Endothelial cell of umbilical vein (primary cell): ENCODE measurements at regions of chr5 and their contacts with region 1.

Region 1: DNA sequence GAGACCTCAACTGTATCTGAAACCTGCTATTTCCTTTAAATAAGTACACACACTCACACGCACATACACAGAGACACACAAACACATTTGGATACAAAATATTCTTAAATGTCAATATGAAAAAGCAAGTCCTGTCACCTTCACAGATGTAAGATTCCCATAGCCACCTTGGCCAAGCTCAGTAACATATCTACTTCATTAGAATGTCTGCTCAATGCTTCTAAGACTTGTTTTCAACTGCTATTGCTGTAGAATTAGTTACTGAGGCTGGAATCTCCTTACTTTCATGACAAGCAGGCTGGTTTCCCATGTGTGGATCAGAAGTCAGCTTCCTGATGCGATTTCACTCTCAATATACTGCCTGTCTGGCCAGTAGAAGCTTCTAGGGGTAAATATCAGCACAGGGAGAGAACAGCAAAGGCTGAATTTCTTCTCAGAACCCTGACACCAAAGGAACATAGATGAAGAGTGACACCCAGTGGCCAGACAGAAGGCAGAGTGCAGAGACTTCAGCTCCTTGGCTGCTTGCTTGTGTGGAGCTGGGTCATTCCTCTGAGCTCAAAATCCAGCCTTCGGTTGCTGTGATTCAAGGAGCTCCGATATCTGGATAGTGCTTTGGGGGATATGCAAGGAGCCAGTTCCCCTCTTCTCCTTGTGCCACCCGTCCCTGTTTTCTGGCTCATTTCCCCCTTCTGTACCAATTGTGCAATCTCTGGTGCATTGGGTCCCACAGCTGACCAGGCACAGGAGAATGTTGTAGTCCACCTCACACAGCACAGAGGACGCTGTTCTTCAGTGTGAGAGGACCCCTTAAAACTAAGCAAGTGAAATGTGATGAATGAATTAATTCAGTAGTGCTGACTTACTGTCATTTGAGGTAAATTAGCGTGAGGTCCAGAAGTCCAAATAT is 26.6 kb upstream of the ABLIM3 start:
- DNase-seq: peak; percentile 88
- H3K4me3 ChIP-seq: no peak overlapping the region
- H3K27ac ChIP-seq: no peak overlapping the region
- H3K4me1 ChIP-seq: peaks cover 6% of the 10 kb centered on the region
- H3K27me3 ChIP-seq: no peaks in the 10 kb centered on the region
- CTCF ChIP-seq: peak; percentile 83 to 88
- POLR2A ChIP-seq: no peak

Region 2: DNA sequence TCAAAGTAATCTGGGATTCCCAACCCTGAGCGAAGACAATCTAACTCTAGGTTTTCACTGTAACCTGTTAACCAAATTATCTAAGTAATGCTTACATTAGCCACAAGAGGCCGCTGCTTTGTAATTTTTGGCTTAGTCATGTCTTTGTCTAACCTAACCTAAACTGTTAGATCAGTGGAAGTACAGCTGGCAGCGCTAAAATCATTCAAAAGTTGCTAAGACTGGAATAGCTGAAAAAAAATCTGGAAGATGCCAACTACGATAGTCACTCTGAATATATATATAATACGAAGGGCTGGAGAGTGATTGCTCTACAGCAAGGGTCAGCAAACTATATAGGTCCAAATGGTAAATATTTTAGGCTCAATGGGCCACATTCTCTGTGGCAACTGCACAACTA is 670.7 kb before region 1 on chr5:
- CTCF ChIA-PET with region 1: interaction called, 12 read pairs
- POLR2A ChIA-PET with region 1: no interaction called
- dilution Hi-C with region 1: no loop called
- intact Hi-C with region 1: no loop called
- DNase-seq: peak; percentile 79
- H3K4me3 ChIP-seq: no peak overlapping the region
- H3K27ac ChIP-seq: no peak overlapping the region
- H3K4me1 ChIP-seq: no peaks in the 10 kb centered on the region
- H3K27me3 ChIP-seq: no peaks in the 10 kb centered on the region
- CTCF ChIP-seq: peak; percentile 48 to 50
- POLR2A ChIP-seq: no peak

Region 3: DNA sequence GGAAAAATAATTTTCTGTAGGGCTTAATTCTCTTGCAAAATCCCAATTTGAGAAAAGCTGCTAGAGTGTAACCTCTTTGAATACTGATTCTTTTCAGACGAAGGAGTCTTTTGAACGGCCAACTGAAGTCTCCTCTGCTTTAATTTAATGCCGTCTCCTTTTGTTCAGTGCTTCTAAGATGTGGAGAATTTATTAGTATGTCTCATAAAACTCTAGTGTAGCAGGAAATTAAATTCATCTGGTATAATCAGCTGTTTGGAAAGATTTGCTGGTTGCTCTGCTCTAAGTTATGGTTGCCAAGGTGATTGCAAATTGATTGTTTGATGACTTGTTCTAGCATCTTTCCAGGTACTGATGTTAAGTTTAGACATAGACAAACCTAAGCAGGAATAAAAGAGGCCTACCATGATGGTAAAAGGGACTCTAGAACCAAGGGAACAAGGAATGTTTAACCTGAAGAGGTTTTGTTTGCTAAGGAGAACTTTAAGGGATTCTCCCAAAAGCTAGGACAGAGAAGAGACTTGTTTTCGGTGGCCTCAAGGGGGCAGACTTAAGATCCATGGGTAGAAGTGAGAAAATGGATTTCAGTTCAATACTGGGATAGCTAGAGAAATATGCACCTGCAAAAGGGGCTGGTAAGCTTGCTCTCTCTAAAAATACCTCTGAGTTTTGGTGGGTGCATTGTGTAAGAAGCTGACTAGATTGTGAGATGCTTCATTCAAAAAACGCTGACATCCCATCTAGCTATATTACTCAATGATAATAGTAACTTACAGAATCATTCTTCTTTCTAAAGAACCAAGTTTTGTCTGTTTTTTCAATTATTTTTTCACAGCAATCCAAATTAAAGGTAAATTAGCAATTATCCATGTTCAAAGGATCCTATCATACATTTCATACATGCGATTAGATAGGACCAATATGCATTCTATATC is 293.9 kb before region 1 on chr5:
- CTCF ChIA-PET with region 1: interaction called, 46 read pairs
- POLR2A ChIA-PET with region 1: no interaction called
- dilution Hi-C with region 1: no loop called
- intact Hi-C with region 1: loop called (anchors 1 kb)
- DNase-seq: peak; percentile 45
- H3K4me3 ChIP-seq: no peak overlapping the region
- H3K27ac ChIP-seq: no peak overlapping the region
- H3K4me1 ChIP-seq: peaks cover 6% of the 10 kb centered on the region
- H3K27me3 ChIP-seq: no peaks in the 10 kb centered on the region
- CTCF ChIP-seq: peak; percentile 57 to 68
- POLR2A ChIP-seq: no peak

Region 4: GRCh38 chr5:148972958-148973357 is 141.7 kb before region 1 on chr5:
- CTCF ChIA-PET with region 1: interaction called, 15 read pairs
- POLR2A ChIA-PET with region 1: no interaction called
- dilution Hi-C with region 1: no loop called
- intact Hi-C with region 1: no loop called
- DNase-seq: peak; percentile 92
- H3K4me3 ChIP-seq: no peak overlapping the region
- H3K27ac ChIP-seq: peak overlapping the region; percentile 99
- H3K4me1 ChIP-seq: peaks cover 46% of the 10 kb centered on the region
- H3K27me3 ChIP-seq: no peaks in the 10 kb centered on the region
- CTCF ChIP-seq: no peak
- POLR2A ChIP-seq: peak; percentile 69

Region 5: DNA sequence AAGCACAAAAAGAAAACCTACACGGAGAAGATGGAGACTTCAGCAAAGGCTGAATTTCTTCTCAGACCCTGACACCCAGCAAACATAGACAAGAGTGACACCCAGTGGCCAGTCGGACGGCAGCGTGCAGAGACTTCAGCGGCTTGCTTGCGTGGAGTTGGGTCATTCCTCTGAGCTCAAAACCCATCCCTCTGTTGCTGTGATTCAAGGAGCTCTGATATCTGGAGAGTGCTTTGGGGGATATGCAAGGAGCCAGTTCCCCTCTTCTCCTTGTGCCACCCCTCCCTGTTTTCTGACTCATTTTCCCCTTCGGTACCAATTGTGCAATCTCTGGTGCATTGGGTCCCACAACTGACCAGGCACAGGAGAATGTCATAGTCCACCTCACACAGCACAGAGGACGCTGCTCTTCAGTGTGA is 79.3 kb before region 1 on chr5:
- CTCF ChIA-PET with region 1: interaction called, 278 read pairs
- POLR2A ChIA-PET with region 1: interaction called, 3 read pairs
- dilution Hi-C with region 1: no loop called
- intact Hi-C with region 1: loop called (anchors 1 kb)
- DNase-seq: peak; percentile 73
- H3K4me3 ChIP-seq: no peak overlapping the region
- H3K27ac ChIP-seq: no peak overlapping the region
- H3K4me1 ChIP-seq: peaks cover 39% of the 10 kb centered on the region
- H3K27me3 ChIP-seq: no peaks in the 10 kb centered on the region
- CTCF ChIP-seq: peak; percentile 87 to 88
- POLR2A ChIP-seq: no peak

Region 6: GRCh38 chr5:149072376-149072775 is 42.3 kb before region 1 on chr5:
- CTCF ChIA-PET with region 1: interaction called, 14 read pairs
- POLR2A ChIA-PET with region 1: no interaction called
- dilution Hi-C with region 1: no loop called
- intact Hi-C with region 1: no loop called
- DNase-seq: no peak
- H3K4me3 ChIP-seq: no peak overlapping the region
- H3K27ac ChIP-seq: no peak overlapping the region
- H3K4me1 ChIP-seq: no peaks in the 10 kb centered on the region
- H3K27me3 ChIP-seq: no peaks in the 10 kb centered on the region
- CTCF ChIP-seq: no peak
- POLR2A ChIP-seq: no peak

Region 7: GRCh38 chr5:149240354-149240998 is 125.8 kb after region 1 on chr5:
- CTCF ChIA-PET with region 1: interaction called, 11 read pairs
- POLR2A ChIA-PET with region 1: no interaction called
- dilution Hi-C with region 1: no loop called
- intact Hi-C with region 1: no loop called
- DNase-seq: no peak
- H3K4me3 ChIP-seq: no peak overlapping the region
- H3K27ac ChIP-seq: no peak overlapping the region
- H3K4me1 ChIP-seq: peaks cover 9% of the 10 kb centered on the region
- H3K27me3 ChIP-seq: no peaks in the 10 kb centered on the region
- CTCF ChIP-seq: no peak
- POLR2A ChIP-seq: no peak

Region 8: DNA sequence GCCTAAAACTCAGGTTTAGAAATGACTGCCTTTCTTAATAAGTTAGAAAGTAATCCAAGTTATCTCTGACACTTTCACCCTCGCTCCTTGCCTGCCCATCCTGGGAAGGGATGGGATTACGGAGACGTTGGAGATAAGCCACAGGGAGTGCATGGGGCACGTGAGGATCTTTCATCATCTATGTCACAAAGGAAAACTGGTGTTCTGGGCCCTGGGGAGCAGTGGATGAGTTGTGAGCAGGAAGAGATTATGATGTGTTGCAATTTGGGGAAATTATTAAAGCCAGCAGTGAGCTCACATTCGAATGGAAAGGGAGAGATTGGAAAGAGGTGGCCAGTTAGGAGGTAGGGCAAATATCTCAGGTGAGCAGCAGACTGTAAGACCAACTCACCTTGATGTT is 169.8 kb after region 1 on chr5:
- CTCF ChIA-PET with region 1: no interaction called
- POLR2A ChIA-PET with region 1: no interaction called
- dilution Hi-C with region 1: no loop called
- intact Hi-C with region 1: no loop called
- DNase-seq: no peak
- H3K4me3 ChIP-seq: no peak overlapping the region
- H3K27ac ChIP-seq: no peak overlapping the region
- H3K4me1 ChIP-seq: peaks cover 22% of the 10 kb centered on the region
- H3K27me3 ChIP-seq: no peaks in the 10 kb centered on the region
- CTCF ChIP-seq: no peak
- POLR2A ChIP-seq: no peak

Region 9: GRCh38 chr5:149345147-149345875 is 230.7 kb after region 1 on chr5 and contains the start of gene GRPEL2:
- CTCF ChIA-PET with region 1: no interaction called
- POLR2A ChIA-PET with region 1: no interaction called
- dilution Hi-C with region 1: no loop called
- intact Hi-C with region 1: no loop called
- DNase-seq: peak; percentile 85
- H3K4me3 ChIP-seq: peak within 1 kb of the TSS; percentile 59 to 90 (median 63)
- H3K27ac ChIP-seq: peak within 1 kb of the TSS; percentile 71
- H3K4me1 ChIP-seq: peaks cover 42% of the 10 kb centered on the region
- H3K27me3 ChIP-seq: no peaks in the 10 kb centered on the region
- CTCF ChIP-seq: no peak
- POLR2A ChIP-seq: peak; percentile 83
- total RNA-seq, gene GRPEL2: 32.5 and 41.0 TPM in 2 replicates

Region 10: GRCh38 chr5:149775785-149776184 is 661.1 kb after region 1 on chr5:
- CTCF ChIA-PET with region 1: no interaction called
- POLR2A ChIA-PET with region 1: no interaction called
- dilution Hi-C with region 1: no loop called
- intact Hi-C with region 1: no loop called
- DNase-seq: no peak
- H3K4me3 ChIP-seq: no peak overlapping the region
- H3K27ac ChIP-seq: no peak overlapping the region
- H3K4me1 ChIP-seq: no peaks in the 10 kb centered on the region
- H3K27me3 ChIP-seq: no peaks in the 10 kb centered on the region
- CTCF ChIP-seq: peak; percentile 26 to 37
- POLR2A ChIP-seq: no peak